HepG2 (cell line): ENCODE measurements at regions of chr20 and their contacts with region 1.

Region 1: DNA sequence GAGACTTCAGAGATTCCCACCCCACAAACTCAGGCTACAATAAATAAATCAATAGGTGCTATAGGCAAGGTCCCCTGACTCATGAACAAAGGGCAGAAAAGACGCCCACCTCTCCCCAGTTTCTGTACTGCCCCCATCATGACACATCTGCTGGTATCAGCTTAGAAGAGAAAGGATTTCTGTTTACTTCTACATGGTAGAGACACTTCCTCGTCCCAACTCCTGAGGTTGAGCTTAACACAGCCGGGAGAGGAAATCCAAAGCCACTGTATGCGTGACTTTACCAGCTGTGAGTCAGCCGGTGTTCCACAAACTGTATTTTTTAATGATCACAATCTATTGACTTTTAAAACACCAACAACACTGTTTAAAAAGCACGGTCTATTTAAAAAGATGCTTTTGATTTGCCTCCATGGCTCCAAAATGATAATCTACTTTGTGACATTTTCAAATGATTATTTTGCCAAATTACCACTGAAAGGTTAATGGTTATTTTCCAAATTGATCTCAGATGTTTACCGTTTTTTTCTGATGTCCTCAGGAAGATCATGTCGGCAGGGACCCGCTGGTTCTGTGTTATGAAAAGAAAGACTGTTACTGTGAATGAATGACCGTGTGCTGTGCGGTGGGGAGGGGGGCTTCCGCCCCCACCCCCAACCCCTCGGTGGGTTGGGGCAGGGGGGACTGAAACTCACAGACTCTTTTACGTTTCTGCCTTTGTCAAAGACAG is 72.5 kb downstream of the ATP9A start:
- DNase-seq: peak; percentile 33
- ATAC-seq: peak; percentile 34; the same call in 1 of the 3 replicates
- H3K4me3 ChIP-seq: no peak overlapping the region
- H3K27ac ChIP-seq: no peak overlapping the region
- H3K4me1 ChIP-seq: peaks cover 52% of the 10 kb centered on the region
- H3K27me3 ChIP-seq: no peaks in the 10 kb centered on the region
- CTCF ChIP-seq: no peak
- EP300 ChIP-seq: no peak
- POLR2A ChIP-seq: no peak
- RAD21 ChIP-seq: no peak

Region 2: GRCh38 chr20:51639206-51639832 is 56.4 kb before region 1 on chr20:
- CTCF ChIA-PET with region 1: interaction called, 7 read pairs
- POLR2A ChIA-PET with region 1: no interaction called
- in situ Hi-C with region 1: no loop called
- intact Hi-C with region 1: loop called (anchors 2 kb)
- DNase-seq: peak; percentile 75
- ATAC-seq: peak; percentile 93
- H3K4me3 ChIP-seq: no peak overlapping the region
- H3K27ac ChIP-seq: no peak overlapping the region
- H3K4me1 ChIP-seq: peaks cover 7% of the 10 kb centered on the region; the same call in 1 of the 2 replicates
- H3K27me3 ChIP-seq: no peaks in the 10 kb centered on the region
- CTCF ChIP-seq: peak; percentile 100
- EP300 ChIP-seq: no peak
- POLR2A ChIP-seq: no peak
- RAD21 ChIP-seq: peak; percentile 98

Region 3: GRCh38 chr20:51647674-51648570 is 47.8 kb before region 1 on chr20:
- CTCF ChIA-PET with region 1: no interaction called
- POLR2A ChIA-PET with region 1: no interaction called
- in situ Hi-C with region 1: no loop called
- intact Hi-C with region 1: loop called (anchors 2 kb)
- DNase-seq: peak; percentile 39
- ATAC-seq: peak; percentile 86
- H3K4me3 ChIP-seq: no peak overlapping the region
- H3K27ac ChIP-seq: no peak overlapping the region
- H3K4me1 ChIP-seq: peaks cover 28% of the 10 kb centered on the region
- H3K27me3 ChIP-seq: no peaks in the 10 kb centered on the region
- CTCF ChIP-seq: no peak
- EP300 ChIP-seq: peak in 1 of 2 experiments; percentile 33; a peak in 1 of 4 replicates
- POLR2A ChIP-seq: no peak
- RAD21 ChIP-seq: no peak

Region 4: GRCh38 chr20:51725380-51726203 is 29.9 kb after region 1 on chr20:
- CTCF ChIA-PET with region 1: no interaction called
- POLR2A ChIA-PET with region 1: no interaction called
- in situ Hi-C with region 1: no loop called
- intact Hi-C with region 1: loop called (anchors 2 kb)
- DNase-seq: peak; percentile 88
- ATAC-seq: peak; percentile 91
- H3K4me3 ChIP-seq: no peak overlapping the region
- H3K27ac ChIP-seq: peak overlapping the region; percentile 10
- H3K4me1 ChIP-seq: peaks cover 52% of the 10 kb centered on the region
- H3K27me3 ChIP-seq: no peaks in the 10 kb centered on the region
- CTCF ChIP-seq: no peak
- EP300 ChIP-seq: no peak
- POLR2A ChIP-seq: no peak
- RAD21 ChIP-seq: no peak

Region 5: DNA sequence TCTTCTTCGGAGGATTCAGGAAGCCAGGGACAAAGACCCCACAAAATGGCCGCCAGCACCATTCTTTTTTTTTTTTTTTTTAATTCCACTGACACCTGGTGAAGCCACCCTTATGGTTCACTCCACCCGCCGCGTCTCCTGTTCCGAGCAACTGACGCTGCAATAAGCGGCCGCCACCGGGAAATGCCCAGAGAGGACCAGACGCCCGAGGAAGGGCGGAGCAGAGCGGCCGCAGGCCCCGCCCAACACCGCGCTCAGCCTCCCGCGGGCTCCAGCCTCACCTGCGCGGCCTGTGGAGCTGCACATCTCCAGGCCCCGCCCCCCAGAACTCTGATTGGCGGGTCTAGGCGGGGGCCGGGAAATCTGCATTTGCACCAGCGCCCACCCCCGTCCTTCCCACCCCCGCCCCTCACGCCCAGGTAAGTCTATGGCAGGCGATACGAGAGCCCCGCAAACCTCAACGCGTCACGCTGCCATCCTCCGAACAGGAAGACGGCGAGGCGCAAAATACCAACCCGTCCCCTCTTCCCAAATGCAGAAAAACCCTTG is 71.3 kb after region 1 on chr20:
- CTCF ChIA-PET with region 1: interaction called, 4 read pairs
- POLR2A ChIA-PET with region 1: interaction called, 4 read pairs
- in situ Hi-C with region 1: no loop called
- intact Hi-C with region 1: loop called (anchors 2 kb)
- DNase-seq: peak; percentile 83
- ATAC-seq: peak; percentile 94
- H3K4me3 ChIP-seq: peak overlapping the region; percentile 90 to 99 (median 98)
- H3K27ac ChIP-seq: peak overlapping the region; percentile 68
- H3K4me1 ChIP-seq: peaks cover 31% of the 10 kb centered on the region
- H3K27me3 ChIP-seq: peaks cover 0 to 12% of the 10 kb centered on the region in 2 experiments; a peak in 2 of 5 replicates
- CTCF ChIP-seq: no peak
- EP300 ChIP-seq: peak in 1 of 2 experiments; percentile 47; a peak in 2 of 4 replicates
- POLR2A ChIP-seq: peak; percentile 30 to 77; a peak in 3 of 4 replicates
- RAD21 ChIP-seq: peak; percentile 40; the same call in 1 of the 2 replicates

Region 6: GRCh38 chr20:52219441-52219840 is 523.7 kb after region 1 on chr20:
- CTCF ChIA-PET with region 1: no interaction called
- POLR2A ChIA-PET with region 1: no interaction called
- in situ Hi-C with region 1: no loop called
- intact Hi-C with region 1: no loop called
- DNase-seq: peak; percentile 37
- ATAC-seq: peak; percentile 74
- H3K4me3 ChIP-seq: no peak overlapping the region
- H3K27ac ChIP-seq: no peak overlapping the region
- H3K4me1 ChIP-seq: no peaks in the 10 kb centered on the region
- H3K27me3 ChIP-seq: no peaks in the 10 kb centered on the region; a peak in 2 of 5 replicates
- CTCF ChIP-seq: peak; percentile 54
- EP300 ChIP-seq: no peak
- POLR2A ChIP-seq: no peak
- RAD21 ChIP-seq: no peak